ENCODE measurements at regions of chr15 and their contacts with region 1.

Region 1: DNA sequence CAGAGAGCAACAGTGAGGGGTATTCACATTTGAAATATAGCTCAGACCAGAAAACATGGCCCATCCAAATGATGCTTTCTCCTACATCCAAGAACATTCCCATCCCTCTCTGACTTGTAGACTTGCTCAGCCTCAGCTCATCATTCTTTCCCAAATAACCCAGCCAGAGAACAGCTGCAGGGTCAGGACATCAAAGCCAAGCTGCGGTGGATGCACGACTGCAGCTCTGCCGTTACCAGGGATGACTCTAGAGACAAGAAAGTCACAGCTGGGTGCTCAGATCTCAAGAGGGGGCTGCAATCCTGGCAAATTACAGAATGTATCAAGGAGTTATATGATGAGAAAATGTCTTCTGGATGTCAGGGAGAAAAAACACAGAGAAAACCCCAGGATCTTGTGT is 944.3 kb downstream of the NTRK3 start:
- DNase-seq: no peak
- H3K4me3 ChIP-seq: no peak overlapping the region
- H3K27ac ChIP-seq: no peak overlapping the region
- H3K4me1 ChIP-seq: no peaks in the 10 kb centered on the region
- H3K27me3 ChIP-seq: no peaks in the 10 kb centered on the region
- CTCF ChIP-seq: no peak
- POLR2A ChIP-seq: no peak

Region 2: GRCh38 chr15:86863226-86863915 is 448.9 kb before region 1 on chr15:
- intact Hi-C with region 1: loop called (anchors 5 kb)
- DNase-seq: no peak
- H3K4me3 ChIP-seq: no peak overlapping the region
- H3K27ac ChIP-seq: no peak overlapping the region
- H3K4me1 ChIP-seq: no peaks in the 10 kb centered on the region
- H3K27me3 ChIP-seq: no peaks in the 10 kb centered on the region
- CTCF ChIP-seq: no peak
- POLR2A ChIP-seq: no peak

Measured in breast epithelium (tissue), 4 donors.